GM12878 (cell line): ENCODE measurements at regions of chr4 and their contacts with region 1.

Region 1: GRCh38 chr4:48939785-48940184 is 33.2 kb upstream of the OCIAD2 start:
- DNase-seq: no peak
- ATAC-seq: no peak
- H3K4me3 ChIP-seq: no peak overlapping the region
- H3K27ac ChIP-seq: no peak overlapping the region
- H3K4me1 ChIP-seq: no peaks in the 10 kb centered on the region
- H3K27me3 ChIP-seq: no peaks in the 10 kb centered on the region
- CTCF ChIP-seq: no peak
- EP300 ChIP-seq: no peak
- POLR2A ChIP-seq: no peak
- RAD21 ChIP-seq: no peak

Region 2: DNA sequence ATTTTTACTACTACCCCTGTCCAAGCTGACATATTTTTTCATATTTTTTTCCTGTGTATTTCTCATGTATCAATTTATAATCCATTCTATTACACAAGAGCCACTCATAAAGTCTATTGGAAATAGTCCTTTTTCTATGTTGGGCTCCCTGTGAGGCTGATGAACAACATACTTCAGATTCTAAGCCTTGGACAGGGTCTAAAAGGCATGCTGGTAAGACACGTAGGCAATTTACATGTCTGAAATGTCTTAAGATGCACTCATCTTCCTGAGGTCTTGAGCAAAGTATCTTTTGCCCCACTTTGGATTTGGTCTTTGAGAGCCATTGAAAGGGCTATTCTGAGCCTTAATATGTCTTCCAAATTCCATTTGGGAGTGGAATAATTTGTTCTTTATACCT is 77.1 kb before region 1 on chr4:
- CTCF ChIA-PET with region 1: no interaction called
- POLR2A ChIA-PET with region 1: no interaction called
- RAD21 ChIA-PET with region 1: no interaction called
- SMC1A ChIA-PET with region 1: no interaction called
- in situ Hi-C with region 1: no loop called
- intact Hi-C with region 1: no loop called
- DNase-seq: no peak
- ATAC-seq: no peak
- H3K4me3 ChIP-seq: no peak overlapping the region
- H3K27ac ChIP-seq: no peak overlapping the region
- H3K4me1 ChIP-seq: no peaks in the 10 kb centered on the region
- H3K27me3 ChIP-seq: no peaks in the 10 kb centered on the region
- CTCF ChIP-seq: no peak
- EP300 ChIP-seq: no peak
- POLR2A ChIP-seq: no peak
- RAD21 ChIP-seq: no peak

Region 3: DNA sequence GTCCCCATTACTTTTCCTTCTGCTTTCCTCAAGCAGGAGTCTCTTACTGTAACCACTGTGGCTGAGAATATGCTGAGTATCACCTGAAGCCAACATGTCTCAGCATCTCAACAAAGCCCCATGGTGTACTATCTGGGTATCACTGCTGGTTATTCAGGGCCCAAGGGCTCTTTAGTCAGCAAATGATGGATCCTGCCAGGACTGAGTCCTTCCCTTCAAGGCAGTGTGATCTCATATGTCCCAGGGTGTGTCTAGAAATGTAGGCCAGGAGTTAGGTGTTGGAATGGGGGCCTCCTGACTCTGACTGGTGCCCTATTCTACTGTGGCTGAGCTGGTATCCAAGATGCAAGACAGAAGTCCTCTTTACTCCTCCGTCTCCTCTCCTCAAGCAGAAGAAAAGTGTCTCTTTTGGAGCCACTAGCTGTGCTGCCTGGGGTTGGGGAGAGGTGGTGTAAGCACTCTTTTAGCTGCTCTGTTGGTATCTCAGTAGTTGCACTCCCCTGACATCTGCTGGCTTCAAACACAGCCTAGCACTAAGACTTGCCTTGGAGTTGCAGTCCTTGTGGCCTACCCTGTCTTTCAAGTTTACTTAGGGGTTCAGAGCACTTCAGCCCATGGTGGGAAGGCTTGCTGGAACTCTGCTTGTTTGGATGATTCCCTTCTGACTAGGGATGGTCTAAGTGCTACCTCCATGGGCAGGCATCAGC is 61.8 kb before region 1 on chr4:
- CTCF ChIA-PET with region 1: interaction called, 4 read pairs
- POLR2A ChIA-PET with region 1: no interaction called
- RAD21 ChIA-PET with region 1: no interaction called
- SMC1A ChIA-PET with region 1: no interaction called
- in situ Hi-C with region 1: no loop called
- intact Hi-C with region 1: loop called (anchors 2 kb)
- DNase-seq: no peak
- ATAC-seq: peak; percentile 51; the same call in 2 of the 3 replicates
- H3K4me3 ChIP-seq: no peak overlapping the region
- H3K27ac ChIP-seq: no peak overlapping the region
- H3K4me1 ChIP-seq: no peaks in the 10 kb centered on the region
- H3K27me3 ChIP-seq: no peaks in the 10 kb centered on the region
- CTCF ChIP-seq: 0 out of 6 replicates have a peak, but pooled peaks of 1 of the 3 experiments have one; percentile 11
- EP300 ChIP-seq: no peak
- POLR2A ChIP-seq: no peak
- RAD21 ChIP-seq: peak; percentile 35